Dendritic cell treated with granulocyte-macrophage colony-stimulating factor and Interleukin-4, amounts not matched to agents 40 ng/mL and 50 ng/mL, for 4 days (primary cell): ENCODE measurements at regions of chr21 and their contacts with region 1.

Region 1: GRCh38 chr21:29217818-29218291 is 80.9 kb upstream of the BACH1 start:
- H3K4me3 Mint-ChIP-seq: no peak overlapping the region
- H3K27ac Mint-ChIP-seq: peak overlapping the region; percentile 89
- H3K4me1 Mint-ChIP-seq: peaks cover 38% of the 10 kb centered on the region
- H3K27me3 Mint-ChIP-seq: no peaks in the 10 kb centered on the region

Region 2: DNA sequence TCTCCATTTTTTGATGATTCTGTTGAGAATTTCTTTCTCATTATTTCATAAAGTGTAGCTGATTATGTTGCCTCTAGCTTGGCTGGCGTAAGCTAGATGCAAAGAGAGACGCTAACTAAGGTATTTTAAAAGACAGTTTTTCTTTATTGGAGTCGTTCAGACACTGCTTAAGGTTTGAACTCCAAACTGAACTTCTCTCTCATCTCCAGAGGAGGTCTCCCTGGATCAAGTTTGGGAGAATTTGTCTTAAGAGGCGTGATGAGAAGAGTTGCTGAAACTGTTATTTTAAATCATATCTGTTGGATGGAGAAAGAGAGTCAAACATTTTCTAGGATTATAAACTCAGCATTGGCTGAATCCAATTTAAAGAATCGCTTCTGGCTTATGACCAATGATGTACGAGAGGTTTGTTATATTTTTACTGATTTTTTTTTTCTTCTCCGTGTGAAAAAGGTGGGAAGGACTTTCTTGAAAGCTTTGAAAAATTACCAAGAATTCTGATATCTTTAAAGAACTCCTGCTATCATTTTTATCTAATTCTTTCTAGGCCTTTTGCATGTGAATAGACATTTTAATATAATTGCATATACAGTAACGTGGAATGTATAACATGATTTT is 53.4 kb before region 1 on chr21:
- intact Hi-C with region 1: no loop called
- H3K4me3 Mint-ChIP-seq: no peak overlapping the region
- H3K27ac Mint-ChIP-seq: peak overlapping the region; percentile 96
- H3K4me1 Mint-ChIP-seq: peaks cover 56% of the 10 kb centered on the region
- H3K27me3 Mint-ChIP-seq: no peaks in the 10 kb centered on the region

Region 3: GRCh38 chr21:29181799-29182470 is 35.9 kb before region 1 on chr21:
- intact Hi-C with region 1: loop called (anchors 5 kb)
- H3K4me3 Mint-ChIP-seq: no peak overlapping the region
- H3K27ac Mint-ChIP-seq: peak overlapping the region; percentile 39
- H3K4me1 Mint-ChIP-seq: peaks cover 67% of the 10 kb centered on the region
- H3K27me3 Mint-ChIP-seq: peaks cover 5% of the 10 kb centered on the region

Region 4: DNA sequence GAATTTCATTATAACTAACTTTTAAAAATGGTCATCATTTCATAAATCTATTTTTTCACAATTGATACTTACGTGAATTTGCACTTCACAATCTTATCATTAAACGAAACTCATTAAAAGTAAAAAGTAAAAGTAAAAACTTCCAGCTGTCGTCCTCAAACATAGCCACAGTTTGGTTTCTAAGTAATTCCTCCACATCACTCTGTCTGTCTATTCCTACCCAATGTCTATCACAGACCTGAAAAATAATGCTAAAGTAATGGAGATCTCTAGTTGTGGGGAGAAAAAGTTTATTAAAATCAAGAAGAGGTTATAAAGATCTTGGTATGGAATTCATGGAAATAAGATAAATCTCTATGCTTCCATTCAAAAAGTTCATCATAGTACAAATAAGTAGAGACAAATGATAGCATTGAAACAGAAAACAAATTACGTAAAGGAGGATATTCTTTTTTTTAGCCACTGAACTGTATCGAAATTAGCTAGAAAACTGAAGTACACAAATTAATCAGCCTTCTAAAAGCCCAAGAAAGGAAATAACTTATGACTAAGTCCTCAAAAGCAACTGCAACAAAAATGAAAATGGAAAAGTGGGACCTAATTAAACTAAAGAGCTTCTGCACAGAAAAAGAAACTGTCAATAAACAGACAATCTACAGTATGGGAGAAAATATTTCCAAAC is 1977.6 kb after region 1 on chr21:
- intact Hi-C with region 1: no loop called
- H3K4me3 Mint-ChIP-seq: no peak overlapping the region
- H3K27ac Mint-ChIP-seq: peak overlapping the region; percentile 46
- H3K4me1 Mint-ChIP-seq: peaks cover 23% of the 10 kb centered on the region
- H3K27me3 Mint-ChIP-seq: no peaks in the 10 kb centered on the region